Motor neuron (in vitro differentiated cells): ENCODE measurements at regions of chr17 and their contacts with region 1.

Region 1: DNA sequence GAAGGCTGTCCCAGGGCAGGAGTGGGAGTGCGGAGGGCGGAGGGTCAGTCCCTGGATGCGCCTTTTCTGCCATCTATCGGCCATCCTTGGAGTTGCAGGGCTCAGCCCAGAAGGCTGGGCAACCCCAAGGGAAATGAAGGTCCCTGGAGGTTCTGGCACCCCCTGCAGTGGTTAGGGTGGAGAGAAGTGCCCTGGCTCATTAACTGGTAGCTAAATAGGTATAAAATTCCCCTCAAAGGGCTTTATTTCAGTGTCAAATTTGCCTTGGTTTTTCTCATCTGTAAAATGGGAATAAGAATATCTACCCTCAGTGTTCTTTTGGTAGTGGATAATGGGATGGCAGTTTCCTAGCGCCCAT is 22.4 kb downstream of the C17orf75 start:
- ATAC-seq: peak; percentile 63 to 96 (median 73)
- H3K4me3 ChIP-seq: no peak overlapping the region
- H3K27ac ChIP-seq: no peak overlapping the region
- H3K4me1 ChIP-seq: peaks cover 10 to 18% of the 10 kb centered on the region in 2 donors

Region 2: DNA sequence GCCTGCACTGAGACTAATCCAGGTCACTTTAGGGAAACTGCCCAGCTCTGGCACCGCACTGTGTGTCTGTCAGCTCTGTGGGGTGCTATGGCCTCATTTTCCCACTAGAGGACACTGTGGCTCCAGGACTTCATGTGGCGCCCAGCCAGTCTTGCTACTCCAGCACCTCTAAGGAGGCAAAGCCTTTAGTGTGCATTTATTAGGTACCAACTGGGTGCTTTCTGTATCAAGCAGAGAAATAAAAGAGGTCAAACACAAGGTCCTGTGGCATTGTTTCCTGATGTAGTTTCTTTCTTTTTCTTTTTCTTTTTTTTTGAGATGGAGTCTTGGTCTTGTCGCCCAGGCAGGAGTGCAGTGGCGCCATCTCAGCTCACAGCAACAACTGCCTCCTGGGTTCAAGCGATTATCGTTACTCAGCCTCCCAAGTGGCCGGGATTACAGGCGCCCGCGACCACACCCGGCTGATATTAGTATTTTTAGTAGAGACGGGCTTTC is 66.4 kb before region 1 on chr17:
- in situ Hi-C with region 1: loop called in 1 of 9 experiments (anchors 10 kb)
- ATAC-seq: peak; percentile 62 to 96 (median 86)
- H3K4me3 ChIP-seq: no peak overlapping the region
- H3K27ac ChIP-seq: no peak overlapping the region
- H3K4me1 ChIP-seq: peaks cover 24 to 25% of the 10 kb centered on the region in 2 donors

Region 3: GRCh38 chr17:32486111-32486700 is 166.7 kb after region 1 on chr17:
- in situ Hi-C with region 1: no loop called
- ATAC-seq: peak; percentile 74 to 88 (median 77)
- H3K4me3 ChIP-seq: peak overlapping the region; percentile 62 to 99 (median 75)
- H3K27ac ChIP-seq: peak overlapping the region; percentile 86 to 98
- H3K4me1 ChIP-seq: peaks cover 49 to 51% of the 10 kb centered on the region in 2 donors